ENCODE measurements at regions of chr17 and their contacts with region 1.

Region 1: DNA sequence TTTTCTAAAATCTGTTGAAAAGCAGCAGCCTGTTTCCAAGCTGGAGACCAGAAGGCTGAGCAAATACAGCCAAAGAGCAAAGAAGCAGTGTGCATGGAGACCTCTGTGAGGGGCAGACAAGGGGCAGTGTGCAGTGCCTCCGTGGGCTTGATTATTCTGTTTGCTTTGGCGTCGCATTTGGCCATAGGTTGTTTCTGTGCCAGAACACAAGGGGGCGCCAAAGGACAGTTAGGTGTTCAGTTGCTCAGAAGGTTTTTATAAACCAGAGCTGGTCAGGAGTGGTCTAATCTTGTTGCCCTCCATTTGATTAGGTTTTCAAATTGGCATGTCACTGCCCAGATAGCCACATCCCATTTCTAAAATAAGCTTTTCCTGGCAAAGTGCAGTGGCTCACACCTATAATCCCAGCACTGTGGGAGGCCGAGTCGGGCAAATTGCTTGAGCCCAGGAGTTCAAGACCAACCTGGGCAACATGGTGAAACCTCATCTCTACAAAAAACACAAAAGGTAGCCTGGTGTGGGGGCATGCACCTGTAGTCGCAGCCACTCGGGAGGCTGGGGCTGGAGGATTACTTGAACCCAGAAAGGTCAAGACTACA is 10.6 kb downstream of the MYH3 start:
- DNase-seq: peak; percentile 74
- H3K4me3 Mint-ChIP-seq: no peak overlapping the region
- H3K27ac Mint-ChIP-seq: no peak overlapping the region
- H3K4me1 Mint-ChIP-seq: no peaks in the 10 kb centered on the region
- H3K27me3 Mint-ChIP-seq: no peaks in the 10 kb centered on the region

Region 2: DNA sequence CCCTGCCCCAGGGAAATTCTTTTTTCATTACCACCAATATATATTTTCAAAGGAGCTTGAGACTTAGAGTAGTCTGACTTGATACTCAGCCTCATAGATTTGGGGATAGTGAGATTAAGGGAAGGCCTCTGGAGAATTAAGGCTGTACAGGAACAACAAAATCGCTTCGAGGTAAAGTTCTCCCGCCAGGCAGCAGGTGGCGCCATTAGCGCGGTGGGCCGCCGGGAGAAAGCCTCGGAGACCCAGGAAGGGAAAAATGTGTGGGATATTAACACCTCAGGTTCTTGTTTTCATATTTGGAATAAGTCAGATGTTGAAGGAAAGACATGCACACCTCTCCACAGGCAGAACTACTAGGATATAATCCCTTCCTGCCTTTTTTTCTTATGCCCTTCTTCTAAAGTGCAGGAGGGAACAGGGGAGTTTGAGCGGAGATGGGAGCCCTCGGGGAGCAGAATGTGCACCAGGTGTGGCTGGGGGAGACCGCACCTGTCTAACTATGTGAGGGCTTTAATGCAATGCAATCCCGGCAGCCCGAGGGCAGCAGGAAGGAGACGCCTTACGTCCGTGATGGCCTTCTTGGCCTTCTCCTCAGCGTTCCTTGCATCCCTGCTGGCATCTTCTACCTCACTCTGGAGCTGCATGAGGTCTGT is 15.3 kb before region 1 on chr17:
- CTCF ChIA-PET with region 1: interaction called, 41 read pairs
- POLR2A ChIA-PET with region 1: no interaction called
- DNase-seq: peak; percentile 24
- H3K4me3 Mint-ChIP-seq: no peak overlapping the region
- H3K27ac Mint-ChIP-seq: no peak overlapping the region
- H3K4me1 Mint-ChIP-seq: peaks cover 8% of the 10 kb centered on the region
- H3K27me3 Mint-ChIP-seq: no peaks in the 10 kb centered on the region

Region 3: DNA sequence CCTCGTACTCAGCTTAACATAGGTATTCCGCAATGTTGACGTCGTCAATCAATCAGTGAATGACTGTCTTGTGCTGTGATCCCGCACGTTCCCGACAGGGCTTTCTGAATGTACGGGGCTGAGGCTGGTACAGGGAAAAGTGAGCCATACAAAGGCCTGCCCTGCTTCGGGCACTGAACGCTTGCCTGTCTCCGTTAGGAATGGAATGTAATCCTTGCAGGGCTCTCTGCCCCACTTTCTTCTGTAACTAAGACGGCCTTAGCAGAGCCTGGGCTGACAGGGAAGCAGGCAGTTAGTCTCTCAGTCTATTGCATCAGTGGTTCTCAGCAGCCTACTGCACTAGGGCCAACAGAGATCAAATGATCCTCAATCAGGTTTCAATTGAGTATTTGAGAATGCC is 26.8 kb after region 1 on chr17:
- CTCF ChIA-PET with region 1: no interaction called
- POLR2A ChIA-PET with region 1: no interaction called
- DNase-seq: no peak
- H3K4me3 Mint-ChIP-seq: no peak overlapping the region
- H3K27ac Mint-ChIP-seq: no peak overlapping the region
- H3K4me1 Mint-ChIP-seq: no peaks in the 10 kb centered on the region
- H3K27me3 Mint-ChIP-seq: no peaks in the 10 kb centered on the region

Region 4: GRCh38 chr17:10683853-10684252 is 37.4 kb after region 1 on chr17:
- CTCF ChIA-PET with region 1: interaction called, 20 read pairs
- POLR2A ChIA-PET with region 1: no interaction called
- DNase-seq: no peak
- H3K4me3 Mint-ChIP-seq: no peak overlapping the region
- H3K27ac Mint-ChIP-seq: no peak overlapping the region
- H3K4me1 Mint-ChIP-seq: peaks cover 5% of the 10 kb centered on the region
- H3K27me3 Mint-ChIP-seq: no peaks in the 10 kb centered on the region

Region 5: GRCh38 chr17:10844621-10845387 is 198.3 kb after region 1 on chr17:
- CTCF ChIA-PET with region 1: interaction called, 46 read pairs
- POLR2A ChIA-PET with region 1: no interaction called
- DNase-seq: peak; percentile 73
- H3K4me3 Mint-ChIP-seq: peak overlapping the region; percentile 55
- H3K27ac Mint-ChIP-seq: no peak overlapping the region
- H3K4me1 Mint-ChIP-seq: peaks cover 7% of the 10 kb centered on the region
- H3K27me3 Mint-ChIP-seq: peaks cover 7% of the 10 kb centered on the region

Region 6: GRCh38 chr17:10857976-10858375 is 211.5 kb after region 1 on chr17:
- CTCF ChIA-PET with region 1: no interaction called
- POLR2A ChIA-PET with region 1: no interaction called
- DNase-seq: no peak
- H3K4me3 Mint-ChIP-seq: no peak overlapping the region
- H3K27ac Mint-ChIP-seq: no peak overlapping the region
- H3K4me1 Mint-ChIP-seq: no peaks in the 10 kb centered on the region
- H3K27me3 Mint-ChIP-seq: peaks cover 2% of the 10 kb centered on the region

Measured in activated CD4-positive, alpha-beta memory T cell treated with anti-CD3 and anti-CD28 coated beads, Interleukin-2, amount 10 ng/mL, durations not matched to agents 7 days and 5 days (primary cell).